ENCODE measurements at regions of chr5 and their contacts with region 1.

Region 1: DNA sequence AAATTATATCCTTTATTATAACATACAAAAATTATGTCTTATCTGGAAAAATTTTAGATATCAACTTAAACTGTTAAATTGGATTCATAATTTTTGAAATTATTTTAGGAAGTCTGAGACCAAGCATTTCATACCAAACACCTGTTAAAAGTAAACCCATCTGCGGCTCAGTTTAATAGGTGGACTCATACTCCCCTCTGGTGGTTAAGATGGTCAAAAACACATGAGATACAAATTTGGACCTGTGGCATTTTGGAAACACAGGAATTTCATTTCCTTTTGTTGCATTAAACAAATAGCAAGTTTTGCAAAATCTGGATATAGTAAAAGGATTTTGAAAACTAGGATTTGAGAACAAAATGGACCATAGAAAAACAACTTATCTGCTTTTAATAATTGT is 53.7 kb downstream of the RGMB start:
- DNase-seq: no peak
- ATAC-seq: peak; percentile 83
- H3K4me3 ChIP-seq: no peak overlapping the region
- H3K27ac ChIP-seq: no peak overlapping the region
- H3K4me1 ChIP-seq: no peaks in the 10 kb centered on the region
- H3K27me3 ChIP-seq: no peaks in the 10 kb centered on the region
- CTCF ChIP-seq: peak; percentile 46 to 60 (median 47); a peak in 5 of 6 replicates
- EP300 ChIP-seq: no peak
- POLR2A ChIP-seq: no peak
- RAD21 ChIP-seq: peak; percentile 88

Region 2: DNA sequence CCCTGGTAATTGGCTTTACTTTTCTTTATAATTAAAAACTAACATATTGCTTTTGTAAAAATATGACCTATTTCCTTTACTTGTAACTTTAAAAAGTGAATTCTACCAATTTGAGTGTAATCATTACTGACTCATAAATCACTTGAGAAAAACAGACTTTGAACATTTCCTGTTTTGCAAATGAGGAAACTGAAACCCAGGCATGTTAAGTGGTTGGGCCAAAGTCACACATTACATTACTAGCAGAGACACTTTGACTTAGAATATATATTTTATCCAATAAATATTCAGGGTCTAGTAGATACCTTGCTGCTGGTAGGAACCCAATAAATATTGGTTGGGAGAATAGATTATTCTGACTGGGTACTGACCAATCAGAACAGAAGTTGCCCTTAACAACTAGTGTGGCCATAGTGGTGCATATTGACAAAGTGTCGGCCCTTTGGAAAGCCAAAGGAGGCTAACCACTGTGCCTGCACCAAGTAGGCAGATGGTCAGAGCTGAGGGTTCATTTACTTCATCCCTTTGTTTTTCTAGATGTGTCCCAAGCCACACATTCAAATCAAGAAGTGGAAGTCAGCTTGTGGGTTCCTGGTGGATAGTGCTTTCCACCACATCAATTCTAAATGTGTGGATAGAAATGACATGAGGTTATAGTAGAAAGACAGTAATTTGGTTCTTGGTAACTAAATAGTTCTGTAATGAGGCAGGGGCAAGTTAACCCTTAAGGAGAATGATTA is 1279.0 kb before region 1 on chr5:
- CTCF ChIA-PET with region 1: no interaction called
- POLR2A ChIA-PET with region 1: no interaction called
- RAD21 ChIA-PET with region 1: no interaction called
- SMC1A ChIA-PET with region 1: no interaction called
- in situ Hi-C with region 1: no loop called
- intact Hi-C with region 1: loop called (anchors 10 kb)
- DNase-seq: peak; percentile 42
- ATAC-seq: peak; percentile 85
- H3K4me3 ChIP-seq: no peak overlapping the region
- H3K27ac ChIP-seq: peak overlapping the region; percentile 45; the same call in 1 of the 2 replicates
- H3K4me1 ChIP-seq: peaks cover 11% of the 10 kb centered on the region
- H3K27me3 ChIP-seq: no peaks in the 10 kb centered on the region
- CTCF ChIP-seq: no peak
- EP300 ChIP-seq: peak; percentile 23 to 68; a peak in 2 of 4 replicates
- POLR2A ChIP-seq: no peak
- RAD21 ChIP-seq: no peak

Region 3: DNA sequence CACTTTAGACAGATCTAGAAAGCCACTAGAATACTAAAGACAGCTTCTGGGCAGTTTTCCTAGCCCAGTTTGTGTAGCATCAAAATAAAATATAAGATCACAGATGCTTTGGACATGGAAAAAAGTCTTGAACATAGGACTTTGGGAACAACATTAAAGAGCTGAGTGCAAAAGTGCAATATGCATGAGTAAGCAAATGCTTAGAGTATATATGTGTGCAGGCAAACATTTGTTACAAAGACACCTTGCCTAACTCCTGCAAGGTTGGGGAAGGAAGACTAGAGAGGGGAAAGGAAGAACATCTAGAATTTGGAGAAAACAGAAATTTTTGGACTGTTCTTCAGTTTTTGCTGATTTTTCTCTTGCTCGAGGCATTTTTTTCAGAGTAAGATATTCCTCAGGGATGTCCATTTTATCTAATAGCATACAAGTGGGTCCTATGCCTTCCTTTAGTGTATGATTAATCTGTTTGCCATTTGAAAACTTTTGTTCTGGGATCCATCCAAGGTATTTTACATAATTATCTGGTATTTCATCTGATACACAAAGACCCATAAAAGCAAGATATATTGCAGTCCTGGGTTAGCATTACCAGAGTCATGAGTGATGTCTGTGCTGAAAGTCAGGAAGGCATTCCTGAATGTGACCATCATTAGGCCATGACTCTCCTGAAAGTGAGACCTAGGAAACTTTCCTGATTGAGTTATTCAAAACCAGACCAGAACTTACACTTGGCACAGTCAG is 195.7 kb before region 1 on chr5:
- CTCF ChIA-PET with region 1: no interaction called
- POLR2A ChIA-PET with region 1: no interaction called
- RAD21 ChIA-PET with region 1: no interaction called
- SMC1A ChIA-PET with region 1: no interaction called
- in situ Hi-C with region 1: no loop called
- intact Hi-C with region 1: loop called (anchors 10 kb)
- DNase-seq: no peak
- ATAC-seq: no peak
- H3K4me3 ChIP-seq: no peak overlapping the region
- H3K27ac ChIP-seq: no peak overlapping the region
- H3K4me1 ChIP-seq: no peaks in the 10 kb centered on the region
- H3K27me3 ChIP-seq: no peaks in the 10 kb centered on the region
- CTCF ChIP-seq: no peak
- EP300 ChIP-seq: no peak
- POLR2A ChIP-seq: no peak
- RAD21 ChIP-seq: no peak

Region 4: GRCh38 chr5:99243111-99243510 is 415.9 kb after region 1 on chr5:
- CTCF ChIA-PET with region 1: no interaction called
- POLR2A ChIA-PET with region 1: no interaction called
- RAD21 ChIA-PET with region 1: no interaction called
- SMC1A ChIA-PET with region 1: no interaction called
- in situ Hi-C with region 1: no loop called
- intact Hi-C with region 1: no loop called
- DNase-seq: no peak
- ATAC-seq: no peak
- H3K4me3 ChIP-seq: no peak overlapping the region
- H3K27ac ChIP-seq: no peak overlapping the region
- H3K4me1 ChIP-seq: no peaks in the 10 kb centered on the region
- H3K27me3 ChIP-seq: no peaks in the 10 kb centered on the region
- CTCF ChIP-seq: no peak
- EP300 ChIP-seq: no peak
- POLR2A ChIP-seq: no peak
- RAD21 ChIP-seq: no peak